ENCODE measurements at regions of chr12 and their contacts with region 1.

Region 1: DNA sequence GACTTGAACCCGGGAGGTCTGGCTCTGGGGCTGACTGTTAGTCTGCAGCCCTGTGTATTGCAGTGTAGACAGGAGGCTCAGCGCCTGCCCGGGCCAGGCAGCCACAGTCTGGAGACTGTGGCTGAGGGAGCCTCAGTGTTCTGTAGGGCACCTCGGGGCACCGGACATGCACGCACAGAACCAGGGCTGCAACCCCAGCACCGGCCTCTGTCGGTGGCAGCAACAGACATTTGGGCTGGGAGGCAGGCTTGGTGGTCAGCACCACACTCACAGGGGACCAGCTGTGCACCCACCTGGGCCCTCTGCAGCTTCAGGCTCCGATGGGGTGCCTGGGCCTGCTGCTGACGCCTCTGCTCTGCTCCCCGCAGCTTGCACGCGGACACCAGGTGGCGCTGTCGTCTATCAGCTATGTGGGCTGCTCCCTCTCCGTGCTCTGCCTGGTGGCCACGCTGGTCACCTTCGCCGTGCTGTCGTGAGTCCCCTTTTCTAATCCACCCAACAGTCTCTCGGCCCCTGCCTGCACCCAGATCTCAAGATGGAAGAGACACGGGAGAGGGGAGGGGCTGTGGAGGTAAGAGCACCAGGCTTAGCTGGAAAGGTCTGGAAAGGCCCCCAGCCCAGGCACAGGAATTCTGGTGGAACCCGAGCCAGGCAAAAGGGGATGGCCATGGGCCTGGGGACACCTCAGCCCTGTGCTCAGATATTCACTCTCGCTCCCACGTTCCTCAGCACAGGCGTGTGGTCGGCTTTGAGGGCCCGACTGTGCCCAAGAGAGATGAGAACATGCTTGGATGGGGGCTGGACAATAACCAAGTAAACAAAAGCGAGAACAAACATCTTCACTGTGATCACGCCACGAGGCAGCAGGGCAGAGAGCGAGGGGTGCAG is 151.0 kb downstream of the ADGRD1 start:
- DNase-seq: peak; percentile 70
- H3K4me3 Mint-ChIP-seq: no peak overlapping the region
- H3K27ac Mint-ChIP-seq: peak overlapping the region; percentile 26
- H3K4me1 Mint-ChIP-seq: peaks cover 18% of the 10 kb centered on the region
- H3K27me3 Mint-ChIP-seq: no peaks in the 10 kb centered on the region

Region 2: GRCh38 chr12:130916251-130916911 is 188.3 kb before region 1 on chr12:
- intact Hi-C with region 1: loop called (anchors 10 kb)
- DNase-seq: no peak
- H3K4me3 Mint-ChIP-seq: no peak overlapping the region
- H3K27ac Mint-ChIP-seq: no peak overlapping the region
- H3K4me1 Mint-ChIP-seq: no peaks in the 10 kb centered on the region
- H3K27me3 Mint-ChIP-seq: peaks cover 31% of the 10 kb centered on the region

Region 3: GRCh38 chr12:131092901-131093603 is 11.7 kb before region 1 on chr12:
- intact Hi-C with region 1: loop called (anchors 2 kb)
- DNase-seq: peak; percentile 27
- H3K4me3 Mint-ChIP-seq: peak overlapping the region; percentile 49
- H3K27ac Mint-ChIP-seq: peak overlapping the region; percentile 50
- H3K4me1 Mint-ChIP-seq: peaks cover 24% of the 10 kb centered on the region
- H3K27me3 Mint-ChIP-seq: no peaks in the 10 kb centered on the region

Region 4: DNA sequence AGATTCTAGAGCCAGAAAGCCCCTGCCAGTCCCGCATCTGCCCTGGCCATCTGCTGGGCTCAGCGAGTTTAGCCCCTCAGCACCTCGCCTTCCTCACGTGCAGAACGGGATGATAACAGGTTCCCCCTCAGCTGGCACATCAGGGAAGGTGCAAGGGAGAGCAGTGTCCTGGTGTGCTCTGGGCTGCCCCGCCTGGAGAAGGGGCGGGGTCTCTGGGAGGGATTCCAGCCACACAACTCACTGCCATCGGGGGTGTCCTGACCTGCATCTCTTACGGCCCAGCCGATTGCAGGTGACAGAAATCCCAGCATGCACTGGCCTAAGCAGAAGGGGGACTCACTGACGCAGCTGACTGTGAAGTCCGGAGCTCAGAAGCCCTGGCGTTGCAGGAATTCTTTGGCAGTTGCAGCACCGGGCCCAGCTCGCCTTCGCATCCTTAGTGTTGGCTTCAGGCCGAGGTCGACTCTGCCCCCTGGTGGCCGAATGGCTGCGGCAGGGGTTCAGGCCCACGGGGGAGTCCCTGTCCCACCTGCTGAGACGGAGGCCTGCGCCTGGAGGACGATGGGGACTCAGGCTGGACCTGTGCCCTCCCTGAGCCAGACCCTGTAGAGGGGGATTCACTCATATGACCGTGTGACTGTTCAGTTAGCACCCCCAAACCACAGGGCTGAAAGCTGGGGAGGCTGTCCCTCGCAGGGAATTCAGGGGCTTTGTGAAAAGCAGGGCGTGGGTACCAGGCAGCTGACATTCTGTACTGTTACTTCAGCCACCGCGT is 27.6 kb after region 1 on chr12:
- intact Hi-C with region 1: loop called (anchors 1 kb)
- DNase-seq: peak; percentile 49
- H3K4me3 Mint-ChIP-seq: no peak overlapping the region
- H3K27ac Mint-ChIP-seq: no peak overlapping the region
- H3K4me1 Mint-ChIP-seq: peaks cover 1% of the 10 kb centered on the region
- H3K27me3 Mint-ChIP-seq: no peaks in the 10 kb centered on the region

Region 5: DNA sequence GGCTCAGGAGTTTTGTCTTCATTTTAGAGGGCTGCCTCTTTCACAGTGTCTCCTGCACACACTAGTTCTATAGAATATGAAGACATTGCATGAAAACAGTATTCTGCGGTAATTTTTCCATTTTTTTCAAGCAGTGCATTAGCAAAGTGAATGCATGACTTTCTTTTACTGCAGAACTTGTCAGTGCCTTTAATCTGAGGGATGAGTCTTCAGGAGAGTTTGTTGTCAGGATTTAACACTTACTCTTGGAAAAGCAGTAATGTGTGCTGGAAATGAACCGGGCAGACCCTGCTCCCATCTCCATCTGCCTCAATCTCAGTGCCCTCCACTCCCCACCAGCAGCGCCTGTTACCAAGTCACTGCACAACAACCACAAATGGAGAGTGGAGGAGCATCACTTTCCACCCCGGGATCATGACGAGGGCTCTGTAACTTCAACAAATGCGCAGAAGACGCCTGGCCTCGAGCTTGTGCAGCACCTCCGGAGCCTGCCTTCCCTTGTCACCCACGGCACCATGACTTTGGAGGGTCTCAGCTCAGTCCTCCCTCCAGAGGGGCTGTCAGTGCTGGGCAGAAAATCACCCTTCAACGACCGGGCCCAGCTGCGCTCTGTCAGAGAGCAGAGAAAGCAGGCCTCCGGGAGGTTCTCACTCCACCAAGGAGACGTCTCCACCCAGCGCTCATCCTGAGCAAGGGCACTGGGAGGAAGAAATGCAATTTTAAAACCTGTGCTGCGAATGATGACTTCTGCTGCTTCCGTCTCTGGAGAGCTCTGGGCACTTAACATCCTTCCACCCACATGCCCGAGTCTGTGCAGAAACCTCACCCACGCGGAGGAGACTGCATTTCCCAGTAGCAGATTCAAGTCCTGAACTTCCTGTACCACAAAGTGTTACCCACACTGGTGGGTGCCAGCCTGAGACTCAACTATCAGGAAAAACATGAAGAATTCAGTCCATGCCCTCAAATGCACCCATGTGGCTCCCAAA is 104.7 kb after region 1 on chr12:
- intact Hi-C with region 1: loop called (anchors 2 kb)
- DNase-seq: no peak
- H3K4me3 Mint-ChIP-seq: peak overlapping the region; percentile 5
- H3K27ac Mint-ChIP-seq: peak overlapping the region; percentile 52
- H3K4me1 Mint-ChIP-seq: peaks cover 24% of the 10 kb centered on the region
- H3K27me3 Mint-ChIP-seq: no peaks in the 10 kb centered on the region

Region 6: GRCh38 chr12:131454418-131455217 is 349.9 kb after region 1 on chr12:
- intact Hi-C with region 1: loop called (anchors 10 kb)
- DNase-seq: no peak
- H3K4me3 Mint-ChIP-seq: no peak overlapping the region
- H3K27ac Mint-ChIP-seq: no peak overlapping the region
- H3K4me1 Mint-ChIP-seq: no peaks in the 10 kb centered on the region
- H3K27me3 Mint-ChIP-seq: peaks cover 6% of the 10 kb centered on the region